ENCODE measurements at regions of chr10 and their contacts with region 1.

Region 1: GRCh38 chr10:22436884-22437619 is 91.8 kb downstream of the SPAG6 start:
- DNase-seq: peak; percentile 96
- ATAC-seq: peak; percentile 86
- H3K4me3 ChIP-seq: peak overlapping the region; percentile 65 to 93 (median 86)
- H3K4me3 Mint-ChIP-seq: peak overlapping the region; percentile 98
- H3K27ac ChIP-seq: peak overlapping the region; percentile 96 to 97
- H3K27ac Mint-ChIP-seq: peak overlapping the region; percentile 99
- H3K4me1 ChIP-seq: peaks cover 19 to 24% of the 10 kb centered on the region in 2 donors
- H3K4me1 Mint-ChIP-seq: peaks cover 36% of the 10 kb centered on the region
- H3K27me3 ChIP-seq: no peaks in the 10 kb centered on the region
- H3K27me3 Mint-ChIP-seq: no peaks in the 10 kb centered on the region
- CTCF ChIP-seq: peak; percentile 25

Region 2: GRCh38 chr10:22228943-22229801 is 207.9 kb before region 1 on chr10:
- CTCF ChIA-PET with region 1: interaction called, 7 read pairs
- POLR2A ChIA-PET with region 1: interaction called, 18 read pairs
- intact Hi-C with region 1: loop called (anchors 1 kb)
- DNase-seq: peak; percentile 96
- ATAC-seq: peak; percentile 81
- H3K4me3 ChIP-seq: peak overlapping the region; percentile 68 to 83 (median 81)
- H3K4me3 Mint-ChIP-seq: peak overlapping the region; percentile 90
- H3K27ac ChIP-seq: peak overlapping the region; percentile 66 to 77
- H3K27ac Mint-ChIP-seq: peak overlapping the region; percentile 100
- H3K4me1 ChIP-seq: no peaks in the 10 kb centered on the region
- H3K4me1 Mint-ChIP-seq: peaks cover 14% of the 10 kb centered on the region
- H3K27me3 ChIP-seq: no peaks in the 10 kb centered on the region
- H3K27me3 Mint-ChIP-seq: peaks cover 7% of the 10 kb centered on the region
- CTCF ChIP-seq: no peak

Region 3: DNA sequence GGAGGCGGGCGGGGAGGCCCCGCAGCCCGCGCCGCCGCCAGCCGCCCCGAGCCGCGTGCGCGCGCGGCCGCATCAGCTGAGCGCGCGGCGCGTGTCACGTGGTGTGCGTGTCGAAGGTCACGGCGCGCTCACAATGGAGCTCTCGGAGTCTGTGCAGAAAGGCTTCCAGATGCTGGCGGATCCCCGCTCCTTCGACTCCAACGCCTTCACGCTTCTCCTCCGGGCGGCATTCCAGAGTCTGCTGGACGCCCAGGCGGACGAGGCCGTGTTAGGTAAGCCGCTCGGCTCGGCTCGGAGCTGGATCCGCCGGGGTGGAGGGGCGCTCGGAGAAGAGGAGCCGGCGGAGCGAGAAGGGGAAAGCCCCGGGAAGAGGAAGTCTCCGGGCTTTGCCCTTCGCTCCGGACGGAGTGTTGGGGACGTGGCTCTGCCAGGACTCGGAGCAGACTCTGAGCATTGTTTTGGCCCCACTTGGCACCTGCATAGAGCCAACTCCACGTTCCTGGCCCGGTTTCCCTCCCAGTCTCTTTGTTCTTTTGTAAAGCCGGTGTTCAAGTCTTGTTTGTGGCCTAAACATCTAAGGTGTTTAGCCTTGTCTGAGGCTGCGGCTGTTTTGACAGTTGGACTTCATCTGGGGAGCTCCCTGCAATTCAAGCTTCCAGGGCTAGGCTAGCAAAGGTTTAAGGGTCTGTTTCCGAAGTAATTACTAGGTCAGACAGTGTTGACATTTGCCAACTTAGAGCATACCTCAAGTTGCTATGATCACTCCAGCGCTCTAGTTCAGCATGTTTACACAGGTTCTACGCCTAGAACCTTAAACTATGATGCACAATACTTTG is 120.5 kb before region 1 on chr10 and contains the start of gene COMMD3:
- CTCF ChIA-PET with region 1: interaction called, 9 read pairs
- POLR2A ChIA-PET with region 1: interaction called, 26 read pairs
- intact Hi-C with region 1: loop called (anchors 2 kb)
- DNase-seq: peak; percentile 95
- ATAC-seq: peak; percentile 56
- H3K4me3 ChIP-seq: peak within 1 kb of the TSS; percentile 65 to 90 (median 84)
- H3K4me3 Mint-ChIP-seq: peak within 1 kb of the TSS; percentile 97
- H3K27ac ChIP-seq: peak within 1 kb of the TSS; percentile 88 to 92
- H3K27ac Mint-ChIP-seq: peak within 1 kb of the TSS; percentile 98
- H3K4me1 ChIP-seq: peaks cover 21 to 34% of the 10 kb centered on the region in 2 donors
- H3K4me1 Mint-ChIP-seq: peaks cover 36% of the 10 kb centered on the region
- H3K27me3 ChIP-seq: no peaks in the 10 kb centered on the region
- H3K27me3 Mint-ChIP-seq: no peaks in the 10 kb centered on the region
- CTCF ChIP-seq: no peak
- total RNA-seq, gene COMMD3: 74.3 and 78.0 TPM in 2 replicates

Region 4: GRCh38 chr10:22340362-22341189 is 96.5 kb before region 1 on chr10:
- CTCF ChIA-PET with region 1: interaction called, 3 read pairs
- POLR2A ChIA-PET with region 1: interaction called, 32 read pairs
- intact Hi-C with region 1: loop called (anchors 2 kb)
- DNase-seq: peak; percentile 92
- ATAC-seq: peak; percentile 62
- H3K4me3 ChIP-seq: peak overlapping the region; percentile 62 to 79 (median 73)
- H3K4me3 Mint-ChIP-seq: peak overlapping the region; percentile 94
- H3K27ac ChIP-seq: peak overlapping the region; percentile 70 to 81
- H3K27ac Mint-ChIP-seq: peak overlapping the region; percentile 94
- H3K4me1 ChIP-seq: peaks cover 38 to 72% of the 10 kb centered on the region in 2 donors
- H3K4me1 Mint-ChIP-seq: peaks cover 31% of the 10 kb centered on the region
- H3K27me3 ChIP-seq: peaks cover 11 to 86% (median 73%) of the 10 kb centered on the region in 4 experiments
- H3K27me3 Mint-ChIP-seq: peaks cover 58% of the 10 kb centered on the region
- CTCF ChIP-seq: no peak

Region 5: GRCh38 chr10:22475651-22476600 is 38.9 kb after region 1 on chr10:
- CTCF ChIA-PET with region 1: no interaction called
- POLR2A ChIA-PET with region 1: interaction called, 4 read pairs
- intact Hi-C with region 1: loop called (anchors 2 kb)
- DNase-seq: peak; percentile 68
- ATAC-seq: peak; percentile 31
- H3K4me3 ChIP-seq: peak overlapping the region; percentile 35 to 58 (median 41)
- H3K4me3 Mint-ChIP-seq: peak overlapping the region; percentile 95
- H3K27ac ChIP-seq: no peak overlapping the region
- H3K27ac Mint-ChIP-seq: peak overlapping the region; percentile 72
- H3K4me1 ChIP-seq: peaks cover 20 to 25% of the 10 kb centered on the region in 2 donors
- H3K4me1 Mint-ChIP-seq: peaks cover 15% of the 10 kb centered on the region
- H3K27me3 ChIP-seq: peaks cover 1 to 55% (median 44%) of the 10 kb centered on the region in 4 experiments
- H3K27me3 Mint-ChIP-seq: peaks cover 47% of the 10 kb centered on the region
- CTCF ChIP-seq: no peak

Region 6: DNA sequence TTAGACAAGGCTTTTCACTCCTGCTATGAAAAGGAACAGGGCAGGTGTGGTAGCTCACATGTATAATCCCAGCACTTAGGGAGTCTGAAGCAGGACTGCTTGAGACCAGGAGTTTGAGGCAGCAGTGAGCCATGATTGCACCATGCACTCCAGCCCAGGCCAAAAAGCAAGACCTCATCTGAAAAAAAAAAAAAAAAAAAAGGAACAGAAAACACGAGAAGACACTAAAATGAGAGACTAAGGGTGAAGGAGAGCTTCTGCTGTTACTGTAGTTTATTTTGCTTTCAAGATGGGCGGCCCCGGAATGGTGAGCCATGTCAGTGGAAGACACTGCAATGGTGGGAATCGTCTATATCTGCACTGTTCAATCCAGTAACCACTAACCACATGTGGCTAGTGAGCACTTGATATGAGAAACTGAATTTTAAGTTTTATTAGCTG is 267.4 kb after region 1 on chr10:
- CTCF ChIA-PET with region 1: no interaction called
- POLR2A ChIA-PET with region 1: no interaction called
- intact Hi-C with region 1: no loop called
- DNase-seq: peak; percentile 61
- ATAC-seq: peak; percentile 70
- H3K4me3 ChIP-seq: peak overlapping the region in 2 of 5 experiments; percentile 12 to 16
- H3K4me3 Mint-ChIP-seq: peak overlapping the region; percentile 79
- H3K27ac ChIP-seq: peak overlapping the region; percentile 25 to 57
- H3K27ac Mint-ChIP-seq: peak overlapping the region; percentile 91
- H3K4me1 ChIP-seq: peaks cover 79 to 80% of the 10 kb centered on the region in 2 donors
- H3K4me1 Mint-ChIP-seq: peaks cover 90% of the 10 kb centered on the region
- H3K27me3 ChIP-seq: no peaks in the 10 kb centered on the region
- H3K27me3 Mint-ChIP-seq: no peaks in the 10 kb centered on the region
- CTCF ChIP-seq: no peak

Region 7: GRCh38 chr10:22714479-22715289 is 277.6 kb after region 1 on chr10 and contains the start of gene PIP4K2A:
- CTCF ChIA-PET with region 1: no interaction called
- POLR2A ChIA-PET with region 1: interaction called, 3 read pairs
- intact Hi-C with region 1: loop called (anchors 1 kb)
- DNase-seq: peak; percentile 87
- ATAC-seq: peak; percentile 81
- H3K4me3 ChIP-seq: peak within 1 kb of the TSS; percentile 70 to 92 (median 90)
- H3K4me3 Mint-ChIP-seq: peak within 1 kb of the TSS; percentile 91
- H3K27ac ChIP-seq: peak within 1 kb of the TSS; percentile 78 to 85
- H3K27ac Mint-ChIP-seq: peak within 1 kb of the TSS; percentile 89
- H3K4me1 ChIP-seq: peaks cover 31 to 38% of the 10 kb centered on the region in 2 donors
- H3K4me1 Mint-ChIP-seq: peaks cover 37% of the 10 kb centered on the region
- H3K27me3 ChIP-seq: no peaks in the 10 kb centered on the region
- H3K27me3 Mint-ChIP-seq: no peaks in the 10 kb centered on the region
- CTCF ChIP-seq: no peak
- total RNA-seq, gene PIP4K2A: 100 and 103 TPM in 2 replicates

Region 8: GRCh38 chr10:22945934-22946673 is 509.1 kb after region 1 on chr10:
- CTCF ChIA-PET with region 1: no interaction called
- POLR2A ChIA-PET with region 1: no interaction called
- intact Hi-C with region 1: no loop called
- DNase-seq: no peak
- ATAC-seq: no peak
- H3K4me3 ChIP-seq: no peak overlapping the region
- H3K4me3 Mint-ChIP-seq: no peak overlapping the region
- H3K27ac ChIP-seq: no peak overlapping the region
- H3K27ac Mint-ChIP-seq: no peak overlapping the region
- H3K4me1 ChIP-seq: no peaks in the 10 kb centered on the region
- H3K4me1 Mint-ChIP-seq: no peaks in the 10 kb centered on the region
- H3K27me3 ChIP-seq: no peaks in the 10 kb centered on the region
- H3K27me3 Mint-ChIP-seq: peaks cover 19% of the 10 kb centered on the region
- CTCF ChIP-seq: no peak